Heart left ventricle (tissue), 16 donors: ENCODE measurements at regions of chr1 and their contacts with region 1.

Region 1: DNA sequence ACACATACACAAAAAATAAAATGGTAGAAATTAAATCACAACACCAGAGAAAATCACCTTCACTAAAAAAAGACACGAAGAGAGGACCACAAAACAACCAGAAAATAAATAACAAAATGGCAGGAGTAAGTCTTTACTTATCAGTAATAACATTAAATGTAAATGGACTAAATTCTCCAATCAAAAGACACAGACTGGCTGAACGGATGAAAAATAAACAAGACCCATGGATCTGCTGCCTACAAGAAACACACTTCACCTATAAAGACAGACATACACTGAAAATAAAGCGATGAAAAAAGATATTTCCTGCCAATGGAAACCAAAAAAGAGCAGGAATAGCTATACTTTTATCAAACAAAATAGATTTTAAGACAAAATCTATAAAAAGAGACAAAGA is 73.6 kb downstream of the ZZZ3 start:
- DNase-seq: no peak
- ATAC-seq: no peak
- H3K4me3 ChIP-seq: no peak overlapping the region
- H3K27ac ChIP-seq: no peak overlapping the region
- H3K4me1 ChIP-seq: peaks cover 0 to 21% (median 14%) of the 10 kb centered on the region in 12 donors
- H3K27me3 ChIP-seq: no peaks in the 10 kb centered on the region
- CTCF ChIP-seq: no peak
- POLR2A ChIP-seq: no peak

Region 2: DNA sequence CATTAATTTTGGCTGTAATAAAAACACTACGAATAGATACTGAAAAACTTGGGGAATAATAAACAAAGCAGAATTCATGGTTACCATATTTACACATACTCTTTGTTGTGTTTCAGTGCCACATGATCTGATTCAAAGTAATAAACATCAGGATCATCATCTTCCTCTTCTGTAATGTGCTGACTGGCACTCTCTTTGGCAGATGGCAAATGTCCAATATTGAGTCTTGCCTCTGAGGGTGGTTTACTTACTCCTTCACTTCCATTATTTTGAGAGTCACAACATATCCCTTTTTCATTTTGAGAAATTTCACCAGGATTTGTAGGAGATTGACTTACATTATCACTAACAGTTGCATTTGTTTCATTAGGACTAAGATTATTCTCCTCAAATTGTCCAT is 22.9 kb after region 1 on chr1:
- intact Hi-C with region 1: loop called in 1 of 10 experiments (anchors 2 kb)
- DNase-seq: no peak
- ATAC-seq: peak in 1 of 4 donors; percentile 22
- H3K4me3 ChIP-seq: no peak overlapping the region
- H3K27ac ChIP-seq: peak overlapping the region in 1 of 12 donors; percentile 32
- H3K4me1 ChIP-seq: peaks cover 0 to 3% (median 0%) of the 10 kb centered on the region in 12 donors
- H3K27me3 ChIP-seq: no peaks in the 10 kb centered on the region
- CTCF ChIP-seq: no peak
- POLR2A ChIP-seq: no peak

Region 3: GRCh38 chr1:77718181-77718580 is 109.3 kb after region 1 on chr1:
- intact Hi-C with region 1: no loop called
- DNase-seq: no peak
- ATAC-seq: no peak
- H3K4me3 ChIP-seq: no peak overlapping the region
- H3K27ac ChIP-seq: no peak overlapping the region
- H3K4me1 ChIP-seq: no peaks in the 10 kb centered on the region
- H3K27me3 ChIP-seq: no peaks in the 10 kb centered on the region
- CTCF ChIP-seq: no peak
- POLR2A ChIP-seq: no peak